Activated naive CD4-positive, alpha-beta T cell treated with anti-CD3 and anti-CD28 coated beads, Interleukin-2, amount 10 ng/mL, durations not matched to agents 7 days and 5 days (primary cell): ENCODE measurements at regions of chr20 and their contacts with region 1.

Region 1: GRCh38 chr20:38221119-38221589 is 39.4 kb downstream of the KIAA1755 start:
- DNase-seq: peak; percentile 78
- H3K4me3 Mint-ChIP-seq: no peak overlapping the region
- H3K27ac Mint-ChIP-seq: no peak overlapping the region
- H3K4me1 Mint-ChIP-seq: no peaks in the 10 kb centered on the region
- H3K27me3 Mint-ChIP-seq: peaks cover 17% of the 10 kb centered on the region

Region 2: DNA sequence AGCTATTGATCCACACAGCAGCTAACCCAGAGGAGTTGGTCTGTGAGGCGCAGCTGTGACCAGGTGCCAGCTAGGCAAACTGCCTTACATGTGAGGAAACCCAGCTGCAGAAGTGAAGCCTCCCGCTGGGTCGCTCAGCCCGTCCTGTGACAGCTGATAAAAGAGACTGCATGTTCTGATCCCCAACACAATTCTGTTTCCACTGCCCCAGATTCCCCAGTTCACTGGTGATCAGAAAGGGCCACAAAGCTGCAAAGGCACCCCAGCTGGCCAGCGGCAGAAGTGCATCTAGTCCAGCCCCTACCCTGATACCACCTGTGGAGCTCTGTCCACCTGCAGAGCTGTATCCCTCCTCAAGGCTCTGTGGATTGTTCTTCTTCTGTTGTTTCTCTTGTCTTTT is 462.8 kb before region 1 on chr20:
- CTCF ChIA-PET with region 1: no interaction called
- DNase-seq: no peak
- H3K4me3 Mint-ChIP-seq: no peak overlapping the region
- H3K27ac Mint-ChIP-seq: no peak overlapping the region
- H3K4me1 Mint-ChIP-seq: peaks cover 4% of the 10 kb centered on the region
- H3K27me3 Mint-ChIP-seq: no peaks in the 10 kb centered on the region

Region 3: DNA sequence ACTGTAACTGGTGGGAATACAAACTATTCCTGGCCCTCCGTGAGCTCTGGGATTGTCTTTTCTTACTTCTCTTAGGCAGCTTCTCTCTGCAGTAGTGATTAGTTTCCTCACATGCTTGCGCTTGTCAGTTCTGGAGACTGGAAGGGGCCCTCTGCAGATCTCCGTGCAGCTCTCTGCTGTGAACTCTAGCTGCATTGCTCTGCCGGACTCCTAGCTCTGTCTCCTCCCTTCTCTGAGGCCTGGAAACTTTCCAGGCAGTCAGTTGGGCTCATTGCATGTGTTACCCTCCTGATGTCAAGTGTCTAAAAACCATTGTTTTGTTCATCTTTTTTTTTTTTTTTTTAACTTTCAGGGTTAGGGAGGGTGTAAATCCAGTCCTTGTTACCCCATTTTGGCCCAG is 425.0 kb before region 1 on chr20:
- CTCF ChIA-PET with region 1: no interaction called
- DNase-seq: no peak
- H3K4me3 Mint-ChIP-seq: no peak overlapping the region
- H3K27ac Mint-ChIP-seq: no peak overlapping the region
- H3K4me1 Mint-ChIP-seq: no peaks in the 10 kb centered on the region
- H3K27me3 Mint-ChIP-seq: no peaks in the 10 kb centered on the region

Region 4: GRCh38 chr20:38057351-38057972 is 163.7 kb before region 1 on chr20:
- CTCF ChIA-PET with region 1: interaction called, 101 read pairs
- DNase-seq: peak; percentile 83
- H3K4me3 Mint-ChIP-seq: no peak overlapping the region
- H3K27ac Mint-ChIP-seq: peak overlapping the region; percentile 83
- H3K4me1 Mint-ChIP-seq: peaks cover 11% of the 10 kb centered on the region
- H3K27me3 Mint-ChIP-seq: no peaks in the 10 kb centered on the region

Region 5: DNA sequence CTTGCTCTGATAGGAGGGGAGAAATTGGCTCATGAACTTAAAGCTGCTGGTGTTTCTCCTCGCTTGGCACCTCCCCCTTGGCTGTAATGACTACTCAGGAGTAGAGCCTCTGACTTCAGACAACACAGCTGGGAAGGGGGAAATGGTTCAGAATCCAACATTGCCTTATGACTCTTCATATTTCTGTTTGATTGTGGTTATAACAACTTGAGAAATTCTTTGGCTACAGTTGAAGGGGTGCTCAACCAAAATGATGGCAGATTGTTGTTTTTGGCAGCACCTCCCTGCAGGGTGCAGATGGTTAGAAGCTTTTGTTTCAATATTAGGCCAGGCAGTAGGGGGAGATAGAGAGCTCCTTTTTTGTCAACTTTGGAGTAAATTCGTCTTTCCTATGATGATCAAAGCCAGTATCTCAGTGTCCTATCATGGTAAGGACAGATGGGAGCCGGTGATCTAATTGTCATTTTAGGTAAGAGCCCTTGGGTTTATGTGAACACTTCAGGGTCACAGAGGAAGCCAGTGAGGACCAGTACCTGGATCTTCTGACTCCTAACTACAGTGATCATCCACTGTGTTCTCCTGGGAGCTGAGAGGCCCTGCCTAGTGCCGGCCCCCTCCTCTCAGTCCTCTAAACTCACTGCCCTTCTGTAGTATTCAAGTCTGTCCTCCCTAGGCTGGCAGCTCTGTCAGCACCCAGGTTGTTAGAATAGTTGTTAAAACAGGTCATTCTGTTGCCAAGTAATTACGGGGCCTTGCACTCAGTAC is 147.7 kb before region 1 on chr20:
- CTCF ChIA-PET with region 1: interaction called, 87 read pairs
- DNase-seq: no peak
- H3K4me3 Mint-ChIP-seq: no peak overlapping the region
- H3K27ac Mint-ChIP-seq: no peak overlapping the region
- H3K4me1 Mint-ChIP-seq: no peaks in the 10 kb centered on the region
- H3K27me3 Mint-ChIP-seq: no peaks in the 10 kb centered on the region

Region 6: GRCh38 chr20:38113401-38114325 is 107.5 kb before region 1 on chr20:
- CTCF ChIA-PET with region 1: interaction called, 42 read pairs
- DNase-seq: peak; percentile 55
- H3K4me3 Mint-ChIP-seq: no peak overlapping the region
- H3K27ac Mint-ChIP-seq: no peak overlapping the region
- H3K4me1 Mint-ChIP-seq: peaks cover 5% of the 10 kb centered on the region
- H3K27me3 Mint-ChIP-seq: peaks cover 4% of the 10 kb centered on the region

Region 7: GRCh38 chr20:38210741-38211140 is 10.4 kb before region 1 on chr20:
- CTCF ChIA-PET with region 1: interaction called, 28 read pairs
- DNase-seq: no peak
- H3K4me3 Mint-ChIP-seq: no peak overlapping the region
- H3K27ac Mint-ChIP-seq: no peak overlapping the region
- H3K4me1 Mint-ChIP-seq: no peaks in the 10 kb centered on the region
- H3K27me3 Mint-ChIP-seq: peaks cover 27% of the 10 kb centered on the region

Region 8: GRCh38 chr20:38387953-38388352 is 166.8 kb after region 1 on chr20:
- CTCF ChIA-PET with region 1: no interaction called
- DNase-seq: no peak
- H3K4me3 Mint-ChIP-seq: no peak overlapping the region
- H3K27ac Mint-ChIP-seq: no peak overlapping the region
- H3K4me1 Mint-ChIP-seq: peaks cover 3% of the 10 kb centered on the region
- H3K27me3 Mint-ChIP-seq: peaks cover 7% of the 10 kb centered on the region